HCT116 (cell line): ENCODE measurements at regions of chr14 and their contacts with region 1.

Region 1: GRCh38 chr14:54253195-54253947 is 143.4 kb upstream of the CDKN3 start:
- DNase-seq: peak; percentile 91
- ATAC-seq: peak; percentile 67
- H3K4me3 ChIP-seq: peak overlapping the region in 1 of 2 experiments; percentile 43; a peak in 2 of 4 replicates
- H3K27ac ChIP-seq: peak overlapping the region; percentile 86
- H3K4me1 ChIP-seq: peaks cover 37 to 54% of the 10 kb centered on the region in 2 experiments
- H3K27me3 ChIP-seq: no peaks in the 10 kb centered on the region; the same call in 1 of the 2 replicates
- CTCF ChIP-seq: no peak
- POLR2A ChIP-seq: no peak
- RAD21 ChIP-seq: peak; percentile 36; the same call in 1 of the 2 replicates

Region 2: DNA sequence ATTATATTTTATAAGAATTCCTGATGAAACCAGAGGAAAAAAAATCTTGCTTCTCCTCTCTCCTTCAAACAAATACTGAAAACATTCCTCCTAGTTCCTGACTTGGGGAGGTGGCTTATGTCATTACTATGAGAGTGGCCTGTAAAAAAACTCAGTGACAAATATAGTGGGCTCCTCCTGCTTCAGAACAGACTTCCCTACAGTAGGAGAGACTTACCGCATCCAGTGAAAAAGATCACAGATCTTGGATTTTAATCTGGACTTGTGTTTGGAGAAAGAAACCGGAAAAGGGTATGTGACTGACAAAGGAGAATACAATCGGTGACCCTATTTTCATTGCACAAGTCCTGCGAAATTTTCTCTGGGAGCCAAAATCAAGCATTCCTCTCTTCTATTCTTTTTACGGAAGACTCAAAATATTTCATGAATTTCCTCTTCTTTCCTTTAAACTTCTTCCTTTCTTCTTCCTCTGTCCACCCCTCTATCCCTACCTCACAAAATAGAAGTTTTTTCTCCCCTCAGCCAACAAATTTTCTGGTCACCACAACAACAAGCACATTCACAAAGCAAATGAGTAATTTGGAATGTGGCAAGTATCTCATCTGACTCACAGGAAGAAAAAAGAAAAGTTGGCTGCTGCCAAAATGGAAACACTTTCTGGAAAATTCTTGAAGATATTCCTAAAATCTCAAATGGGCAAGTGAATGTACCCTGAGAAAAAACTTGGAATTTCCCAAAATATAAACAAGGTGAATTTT is 41.6 kb before region 1 on chr14:
- CTCF ChIA-PET with region 1: no interaction called
- POLR2A ChIA-PET with region 1: no interaction called
- RAD21 ChIA-PET with region 1: no interaction called
- intact Hi-C with region 1: loop called (anchors 5 kb)
- DNase-seq: peak; percentile 64
- ATAC-seq: peak; percentile 77
- H3K4me3 ChIP-seq: peak overlapping the region in 1 of 2 experiments; percentile 13; a peak in 1 of 4 replicates
- H3K27ac ChIP-seq: peak overlapping the region; percentile 81; the same call in 1 of the 2 replicates
- H3K4me1 ChIP-seq: peaks cover 25 to 32% of the 10 kb centered on the region in 2 experiments
- H3K27me3 ChIP-seq: no peaks in the 10 kb centered on the region
- CTCF ChIP-seq: no peak
- POLR2A ChIP-seq: no peak
- RAD21 ChIP-seq: peak; percentile 15; the same call in 1 of the 2 replicates

Region 3: GRCh38 chr14:54312140-54312801 is 58.9 kb after region 1 on chr14:
- CTCF ChIA-PET with region 1: no interaction called
- POLR2A ChIA-PET with region 1: no interaction called
- RAD21 ChIA-PET with region 1: no interaction called
- intact Hi-C with region 1: loop called (anchors 5 kb)
- DNase-seq: peak; percentile 62
- ATAC-seq: peak; percentile 88
- H3K4me3 ChIP-seq: peak overlapping the region in 1 of 2 experiments; percentile 1; a peak in 1 of 4 replicates
- H3K27ac ChIP-seq: peak overlapping the region; percentile 41
- H3K4me1 ChIP-seq: peaks cover 23 to 37% of the 10 kb centered on the region in 2 experiments
- H3K27me3 ChIP-seq: no peaks in the 10 kb centered on the region
- CTCF ChIP-seq: no peak
- POLR2A ChIP-seq: no peak
- RAD21 ChIP-seq: no peak